GM10248 (cell line): ENCODE measurements at regions of chr17 and their contacts with region 1.

Region 1: GRCh38 chr17:77054936-77055335 is 85.8 kb upstream of the SEC14L1 start:
- DNase-seq: no peak
- CTCF ChIP-seq: no peak

Region 2: GRCh38 chr17:76868176-76868668 is 186.7 kb before region 1 on chr17 and contains the start of gene MGAT5B:
- CTCF ChIA-PET with region 1: interaction called, 106 read pairs
- POLR2A ChIA-PET with region 1: no interaction called
- DNase-seq: peak; percentile 93
- CTCF ChIP-seq: peak; percentile 98

Region 3: DNA sequence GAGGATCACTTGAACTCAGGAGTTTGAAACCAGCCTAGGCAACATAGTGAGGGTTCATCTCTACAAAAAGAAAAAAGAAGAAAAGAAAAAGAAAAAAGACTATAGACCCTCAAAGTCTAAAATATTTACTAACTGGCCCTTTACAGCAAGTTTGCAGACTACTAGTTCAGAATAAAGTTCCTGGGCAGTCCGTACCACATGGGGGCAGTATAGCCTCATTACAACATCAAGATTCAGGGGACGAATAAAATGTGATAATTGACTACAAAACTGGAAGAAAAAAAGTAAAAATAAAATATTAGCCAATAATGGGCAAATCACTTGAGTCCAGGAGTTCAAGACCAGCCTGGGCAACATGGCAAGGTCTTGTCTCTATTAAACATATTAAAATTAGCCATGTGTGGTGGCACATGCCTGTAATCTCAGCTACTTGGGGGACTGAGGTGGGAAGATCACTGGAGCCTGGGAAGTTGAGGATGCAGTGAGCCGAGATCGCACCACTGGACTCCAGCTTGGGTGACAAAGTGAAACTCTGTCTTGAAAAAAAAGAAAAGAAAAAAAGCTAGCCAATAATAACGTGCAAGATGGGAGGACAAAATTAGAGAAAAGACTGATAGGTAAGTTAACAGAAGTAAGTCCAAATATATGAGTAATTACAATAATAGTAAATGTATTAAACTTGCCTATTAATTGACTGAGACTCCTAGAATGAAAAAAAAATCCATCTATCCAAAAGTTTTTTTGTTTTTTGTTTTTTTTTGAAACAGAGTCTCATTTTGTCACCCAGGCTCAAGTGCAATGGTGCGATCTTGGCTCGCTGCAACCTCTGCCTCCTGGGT is 43.5 kb before region 1 on chr17:
- CTCF ChIA-PET with region 1: interaction called, 16 read pairs
- POLR2A ChIA-PET with region 1: no interaction called
- DNase-seq: no peak
- CTCF ChIP-seq: peak; percentile 55

Region 4: GRCh38 chr17:77037943-77038342 is 17.0 kb before region 1 on chr17:
- CTCF ChIA-PET with region 1: interaction called, 13 read pairs
- POLR2A ChIA-PET with region 1: no interaction called
- DNase-seq: no peak
- CTCF ChIP-seq: no peak

Region 5: GRCh38 chr17:77068915-77069314 is 14.0 kb after region 1 on chr17:
- CTCF ChIA-PET with region 1: interaction called, 80 read pairs
- POLR2A ChIA-PET with region 1: no interaction called
- DNase-seq: no peak
- CTCF ChIP-seq: no peak

Region 6: GRCh38 chr17:77083531-77083930 is 28.6 kb after region 1 on chr17:
- CTCF ChIA-PET with region 1: interaction called, 12 read pairs
- POLR2A ChIA-PET with region 1: no interaction called
- DNase-seq: no peak
- CTCF ChIP-seq: no peak